ENCODE measurements at regions of chr2 and their contacts with region 1.

Region 1: DNA sequence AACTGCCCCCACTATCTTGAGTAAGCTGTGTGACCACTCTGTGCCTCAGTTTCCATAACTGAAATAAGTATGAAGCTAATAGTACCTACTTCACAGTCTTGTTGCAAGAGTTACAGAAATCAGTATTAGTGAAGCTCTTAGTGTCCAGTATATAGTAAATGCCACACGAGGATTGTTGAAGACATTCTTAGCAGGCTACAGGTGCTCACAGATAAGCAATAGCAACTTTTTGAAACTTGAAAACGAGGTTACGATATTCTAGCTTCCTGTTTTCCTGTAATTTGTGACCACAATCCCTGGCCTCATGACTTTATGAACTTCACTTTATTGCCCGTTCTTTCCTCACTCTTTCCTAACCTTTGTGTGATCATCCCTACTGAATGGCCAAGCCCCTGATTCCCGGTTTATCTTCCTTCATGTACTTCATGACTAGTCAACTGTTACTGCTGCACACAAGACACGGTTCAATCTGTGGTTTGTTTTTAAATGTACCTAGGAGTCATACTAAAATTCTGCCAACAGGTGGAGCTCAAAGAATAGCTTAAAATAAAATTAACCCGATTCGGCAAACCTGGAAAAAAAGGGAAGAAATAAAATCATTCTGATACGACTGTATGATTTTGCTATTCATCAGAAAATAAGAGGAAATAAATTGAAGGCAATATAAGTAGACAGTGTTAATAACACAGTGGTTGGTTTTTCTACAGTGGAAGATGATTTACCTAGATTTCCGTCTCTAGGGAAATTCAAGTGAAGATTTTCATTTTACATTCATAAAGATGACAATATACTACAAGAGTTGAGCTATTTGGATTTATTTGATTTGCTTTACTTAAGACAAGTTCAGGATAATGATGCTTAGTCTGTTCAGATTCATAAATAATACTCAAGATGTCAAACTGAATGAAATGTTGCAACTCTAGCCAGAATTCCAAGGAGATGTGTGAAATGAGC is 38.1 kb upstream of the STAT1 start:
- DNase-seq: peak in 7 of 9 donors; percentile 28 to 66 (median 62)
- ATAC-seq: peak; percentile 84
- H3K4me3 ChIP-seq: no peak overlapping the region
- H3K4me3 Mint-ChIP-seq: no peak overlapping the region
- H3K27ac ChIP-seq: peak overlapping the region; percentile 29
- H3K27ac Mint-ChIP-seq: peak overlapping the region in 1 of 9 donors; percentile 80
- H3K4me1 ChIP-seq: peaks cover 26 to 30% of the 10 kb centered on the region in 2 donors
- H3K4me1 Mint-ChIP-seq: peaks cover 8 to 29% (median 22%) of the 10 kb centered on the region in 7 donors
- H3K27me3 ChIP-seq: no peaks in the 10 kb centered on the region
- H3K27me3 Mint-ChIP-seq: no peaks in the 10 kb centered on the region

Region 2: DNA sequence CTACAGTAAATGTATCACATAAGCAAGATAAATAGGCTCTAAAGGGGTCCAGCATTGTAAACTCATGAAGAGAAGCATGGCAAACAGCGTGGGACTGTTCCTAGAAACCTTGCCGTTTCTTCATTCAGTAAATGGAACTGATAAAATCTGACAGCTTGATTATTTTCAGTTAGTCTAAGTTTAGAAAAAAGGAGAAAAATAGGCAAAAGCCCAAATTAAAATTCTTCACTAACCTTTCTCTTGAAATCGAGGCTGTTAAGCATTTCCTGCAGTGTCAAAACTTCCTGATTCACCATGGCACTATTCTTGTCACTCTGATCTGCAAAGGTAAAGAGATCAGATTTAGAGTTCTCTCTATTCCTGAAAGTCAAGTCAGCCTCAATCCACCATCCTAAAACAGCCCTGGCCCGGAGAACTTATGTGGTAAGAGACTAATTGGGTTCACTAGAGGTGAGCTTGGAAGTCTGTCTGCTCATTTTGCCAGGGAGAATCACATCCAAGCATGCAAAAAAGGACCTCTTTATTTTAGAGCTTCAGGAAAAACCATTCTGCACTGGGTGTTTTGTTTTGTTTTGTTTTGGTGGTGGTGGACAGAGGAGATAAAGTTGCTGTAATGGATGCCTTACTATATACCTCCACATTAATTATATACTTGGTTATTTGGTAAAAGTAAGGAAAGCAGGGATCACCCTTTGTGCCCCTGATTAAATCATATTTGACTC is 14.3 kb after region 1 on chr2:
- CTCF ChIA-PET with region 1: interaction called, 28 read pairs
- POLR2A ChIA-PET with region 1: interaction called, 14 read pairs
- intact Hi-C with region 1: loop called (anchors 1 kb)
- DNase-seq: peak in 2 of 9 donors; percentile 20 to 26
- ATAC-seq: peak; percentile 46
- H3K4me3 ChIP-seq: no peak overlapping the region
- H3K4me3 Mint-ChIP-seq: peak overlapping the region; percentile 42 to 87 (median 67)
- H3K27ac ChIP-seq: peak overlapping the region; percentile 60
- H3K27ac Mint-ChIP-seq: peak overlapping the region; percentile 51 to 95 (median 89)
- H3K4me1 ChIP-seq: peaks cover 53 to 67% of the 10 kb centered on the region in 2 donors
- H3K4me1 Mint-ChIP-seq: peaks cover 51 to 93% (median 88%) of the 10 kb centered on the region in 7 donors
- H3K27me3 ChIP-seq: no peaks in the 10 kb centered on the region
- H3K27me3 Mint-ChIP-seq: no peaks in the 10 kb centered on the region

Region 3: GRCh38 chr2:191245046-191245868 is 193.2 kb after region 1 on chr2 and contains the start of gene MYO1B:
- CTCF ChIA-PET with region 1: no interaction called
- POLR2A ChIA-PET with region 1: no interaction called
- intact Hi-C with region 1: loop called in 1 of 2 experiments (anchors 5 kb)
- DNase-seq: peak; percentile 18 to 78 (median 31)
- ATAC-seq: peak; percentile 78
- H3K4me3 ChIP-seq: peak within 1 kb of the TSS; percentile 50
- H3K4me3 Mint-ChIP-seq: peak within 1 kb of the TSS; percentile 78 to 90 (median 84)
- H3K27ac ChIP-seq: no peak within 1 kb of the TSS
- H3K27ac Mint-ChIP-seq: peak within 1 kb of the TSS in 4 of 9 donors; percentile 42 to 67 (median 61)
- H3K4me1 ChIP-seq: no peaks in the 10 kb centered on the region
- H3K4me1 Mint-ChIP-seq: peaks cover 6 to 16% (median 9%) of the 10 kb centered on the region in 7 donors
- H3K27me3 ChIP-seq: peaks cover 0 to 4% of the 10 kb centered on the region in 2 donors
- H3K27me3 Mint-ChIP-seq: peaks cover 6 to 37% (median 20%) of the 10 kb centered on the region in 5 donors
- total RNA-seq, gene MYO1B: 0.43 to 14.9 (median 0.54) TPM

Region 4: GRCh38 chr2:191352536-191352935 is 300.4 kb after region 1 on chr2:
- CTCF ChIA-PET with region 1: no interaction called
- POLR2A ChIA-PET with region 1: no interaction called
- intact Hi-C with region 1: loop called in 1 of 2 experiments (anchors 10 kb)
- DNase-seq: no peak
- ATAC-seq: no peak
- H3K4me3 ChIP-seq: no peak overlapping the region
- H3K4me3 Mint-ChIP-seq: no peak overlapping the region
- H3K27ac ChIP-seq: no peak overlapping the region
- H3K27ac Mint-ChIP-seq: no peak overlapping the region
- H3K4me1 ChIP-seq: no peaks in the 10 kb centered on the region
- H3K4me1 Mint-ChIP-seq: no peaks in the 10 kb centered on the region
- H3K27me3 ChIP-seq: no peaks in the 10 kb centered on the region
- H3K27me3 Mint-ChIP-seq: peaks cover 0 to 35% (median 13%) of the 10 kb centered on the region in 5 donors

Region 5: GRCh38 chr2:191521608-191522208 is 469.6 kb after region 1 on chr2:
- CTCF ChIA-PET with region 1: interaction called, 4 read pairs
- POLR2A ChIA-PET with region 1: no interaction called
- intact Hi-C with region 1: loop called (anchors 1 kb)
- DNase-seq: peak in 5 of 9 donors; percentile 16 to 51 (median 33)
- ATAC-seq: no peak
- H3K4me3 ChIP-seq: no peak overlapping the region
- H3K4me3 Mint-ChIP-seq: no peak overlapping the region
- H3K27ac ChIP-seq: no peak overlapping the region
- H3K27ac Mint-ChIP-seq: no peak overlapping the region
- H3K4me1 ChIP-seq: no peaks in the 10 kb centered on the region
- H3K4me1 Mint-ChIP-seq: no peaks in the 10 kb centered on the region
- H3K27me3 ChIP-seq: no peaks in the 10 kb centered on the region
- H3K27me3 Mint-ChIP-seq: peaks cover 0 to 28% (median 7%) of the 10 kb centered on the region in 5 donors

Region 6: DNA sequence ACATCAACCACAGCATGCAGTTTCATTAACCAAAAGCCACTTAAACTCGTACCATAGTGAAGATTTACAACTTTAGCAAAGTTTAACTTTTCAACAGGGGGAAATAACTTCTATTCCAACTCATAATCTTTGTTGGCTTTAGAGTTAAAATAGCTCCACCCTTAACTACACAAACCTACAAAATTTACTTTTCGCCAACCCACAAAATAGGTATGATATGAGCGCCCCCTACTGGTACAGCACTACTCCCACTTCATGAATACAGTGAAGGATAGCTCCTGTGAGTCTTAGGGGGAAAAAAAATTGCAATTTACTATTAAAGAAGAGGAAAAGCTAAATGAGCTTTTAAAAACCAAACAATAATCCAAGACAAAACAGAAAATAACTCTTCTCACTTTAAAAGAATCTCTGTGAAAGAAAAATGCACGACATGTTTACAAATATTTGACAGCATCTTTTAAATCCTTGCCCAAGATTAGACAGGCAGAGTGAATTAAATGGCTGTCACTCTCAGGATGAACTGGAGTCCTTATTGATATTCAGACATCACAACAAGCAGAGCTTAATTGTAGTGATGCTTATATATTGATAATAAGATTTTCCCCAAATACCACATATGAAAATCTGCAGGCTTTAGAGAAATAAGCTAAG is 1110.4 kb after region 1 on chr2:
- CTCF ChIA-PET with region 1: no interaction called
- POLR2A ChIA-PET with region 1: no interaction called
- intact Hi-C with region 1: loop called in 1 of 2 experiments (anchors 5 kb)
- DNase-seq: peak; percentile 7 to 70 (median 57)
- ATAC-seq: peak; percentile 82
- H3K4me3 ChIP-seq: no peak overlapping the region
- H3K4me3 Mint-ChIP-seq: peak overlapping the region in 7 of 10 donors; percentile 31 to 56 (median 44)
- H3K27ac ChIP-seq: no peak overlapping the region
- H3K27ac Mint-ChIP-seq: no peak overlapping the region
- H3K4me1 ChIP-seq: peaks cover 0 to 9% of the 10 kb centered on the region in 2 donors
- H3K4me1 Mint-ChIP-seq: peaks cover 8 to 22% (median 13%) of the 10 kb centered on the region in 7 donors
- H3K27me3 ChIP-seq: no peaks in the 10 kb centered on the region
- H3K27me3 Mint-ChIP-seq: peaks cover 8 to 18% (median 12%) of the 10 kb centered on the region in 5 donors

Measured in naive thymus-derived CD4-positive, alpha-beta T cell (primary cell).